Activated B cell treated with CpG ODN at 0.5 μM for 24 hours (primary cell): ENCODE measurements at regions of chr5 and their contacts with region 1.

Region 1: DNA sequence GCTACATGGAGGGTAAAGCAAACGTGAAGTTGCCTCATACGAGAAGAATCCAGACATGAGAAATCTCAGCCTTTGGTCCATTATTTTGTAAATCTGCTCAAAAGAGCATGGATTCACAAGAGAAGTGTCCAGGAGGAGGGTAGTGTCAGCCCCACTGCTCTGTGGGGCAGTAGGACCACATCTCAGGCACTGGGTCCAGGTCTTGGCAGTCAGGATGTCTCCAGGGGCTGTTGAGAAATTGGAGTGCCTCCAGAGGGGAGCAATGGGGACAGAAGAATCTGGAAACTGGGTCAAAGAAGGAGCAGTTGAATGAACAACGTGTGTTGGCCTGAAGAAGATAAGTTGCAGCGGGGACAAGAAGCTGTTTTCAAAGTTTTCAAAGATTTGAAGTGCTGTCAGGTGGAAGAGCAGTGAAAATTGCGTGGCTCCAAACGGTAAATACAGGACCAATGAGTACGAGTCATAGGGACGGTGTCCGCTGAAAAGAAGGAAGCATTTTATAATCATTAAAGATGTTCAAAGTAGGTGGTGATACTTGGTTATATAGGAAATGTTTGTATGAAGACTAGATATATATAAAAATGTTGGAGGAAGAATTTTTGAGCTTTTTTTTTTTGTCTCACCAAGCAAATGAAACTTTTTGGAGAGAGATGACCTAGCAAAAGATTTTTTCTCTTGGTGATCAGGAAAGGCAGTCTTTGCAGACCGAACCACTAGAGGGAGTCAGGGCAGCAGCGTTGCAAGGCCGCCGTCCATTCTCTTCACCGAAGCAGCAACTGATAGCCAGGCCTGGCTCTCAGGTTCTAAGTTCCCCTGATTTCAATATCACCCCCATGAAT is 57.1 kb upstream of the ZBED3 start:
- DNase-seq: no peak
- ATAC-seq: peak; percentile 65
- H3K4me3 Mint-ChIP-seq: no peak overlapping the region
- H3K27ac Mint-ChIP-seq: no peak overlapping the region
- H3K4me1 Mint-ChIP-seq: peaks cover 2% of the 10 kb centered on the region
- H3K27me3 Mint-ChIP-seq: peaks cover 2% of the 10 kb centered on the region
- CTCF ChIP-seq: no peak

Region 2: GRCh38 chr5:77230721-77231470 is 86.7 kb after region 1 on chr5:
- CTCF ChIA-PET with region 1: no interaction called
- POLR2A ChIA-PET with region 1: no interaction called
- intact Hi-C with region 1: no loop called
- DNase-seq: no peak
- ATAC-seq: no peak
- H3K4me3 Mint-ChIP-seq: peak overlapping the region; percentile 42
- H3K27ac Mint-ChIP-seq: no peak overlapping the region
- H3K4me1 Mint-ChIP-seq: peaks cover 9% of the 10 kb centered on the region
- H3K27me3 Mint-ChIP-seq: no peaks in the 10 kb centered on the region
- CTCF ChIP-seq: no peak

Region 3: GRCh38 chr5:77437194-77437593 is 293.0 kb after region 1 on chr5:
- CTCF ChIA-PET with region 1: no interaction called
- POLR2A ChIA-PET with region 1: no interaction called
- intact Hi-C with region 1: loop called (anchors 5 kb)
- DNase-seq: no peak
- ATAC-seq: no peak
- H3K4me3 Mint-ChIP-seq: no peak overlapping the region
- H3K27ac Mint-ChIP-seq: no peak overlapping the region
- H3K4me1 Mint-ChIP-seq: no peaks in the 10 kb centered on the region
- H3K27me3 Mint-ChIP-seq: no peaks in the 10 kb centered on the region
- CTCF ChIP-seq: no peak

Region 4: DNA sequence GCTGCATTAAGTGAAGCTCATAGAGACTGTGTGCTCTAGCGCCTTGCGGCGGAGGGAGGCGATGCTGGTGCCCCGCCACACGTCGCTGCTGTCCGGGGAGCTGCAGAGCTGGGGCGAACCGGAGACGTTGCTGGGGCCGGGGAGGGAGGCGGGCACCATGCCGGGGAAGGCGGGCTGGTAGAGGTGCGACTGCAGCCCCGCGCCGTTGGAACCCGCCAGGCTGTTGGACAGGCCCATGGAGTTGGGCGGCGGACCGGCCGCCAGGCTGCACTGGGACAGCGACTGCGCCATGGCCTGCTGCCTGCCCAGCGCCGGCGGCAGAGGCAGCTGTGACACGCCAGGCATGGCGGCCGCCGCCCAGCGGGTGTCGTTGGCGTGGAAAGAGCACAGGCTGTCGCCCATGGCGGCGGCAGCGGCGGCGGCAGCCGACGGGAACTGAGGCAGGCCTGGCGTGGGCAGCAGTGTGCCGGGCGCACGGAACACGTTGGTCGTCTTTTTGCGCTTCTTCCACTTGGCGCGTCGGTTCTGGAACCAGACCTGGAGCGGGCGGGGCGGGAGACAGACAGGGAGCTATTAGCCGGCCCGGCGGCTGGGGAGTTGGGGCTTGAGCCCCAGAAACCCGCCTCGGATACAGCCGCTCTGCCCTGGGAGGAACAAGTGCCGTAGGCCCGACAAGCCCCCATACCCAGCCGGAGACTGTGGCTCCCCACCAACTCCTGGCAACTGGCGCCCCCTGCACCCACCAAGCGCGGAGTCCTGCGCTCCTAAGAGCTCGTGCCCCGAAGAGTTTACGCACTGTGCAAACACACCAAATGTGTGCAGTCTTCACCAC is 486.3 kb after region 1 on chr5:
- CTCF ChIA-PET with region 1: no interaction called
- POLR2A ChIA-PET with region 1: no interaction called
- intact Hi-C with region 1: loop called (anchors 5 kb)
- DNase-seq: peak; percentile 49
- ATAC-seq: peak; percentile 79
- H3K4me3 Mint-ChIP-seq: peak overlapping the region; percentile 82
- H3K27ac Mint-ChIP-seq: peak overlapping the region; percentile 56
- H3K4me1 Mint-ChIP-seq: peaks cover 28% of the 10 kb centered on the region
- H3K27me3 Mint-ChIP-seq: peaks cover 41% of the 10 kb centered on the region
- CTCF ChIP-seq: no peak

Region 5: GRCh38 chr5:78908173-78909061 is 1764.2 kb after region 1 on chr5:
- CTCF ChIA-PET with region 1: no interaction called
- POLR2A ChIA-PET with region 1: no interaction called
- intact Hi-C with region 1: no loop called
- DNase-seq: no peak
- ATAC-seq: no peak
- H3K4me3 Mint-ChIP-seq: peak overlapping the region; percentile 70
- H3K27ac Mint-ChIP-seq: peak overlapping the region; percentile 59
- H3K4me1 Mint-ChIP-seq: peaks cover 67% of the 10 kb centered on the region
- H3K27me3 Mint-ChIP-seq: no peaks in the 10 kb centered on the region
- CTCF ChIP-seq: no peak